ENCODE measurements at regions of chr17 and their contacts with region 1.

Region 1: DNA sequence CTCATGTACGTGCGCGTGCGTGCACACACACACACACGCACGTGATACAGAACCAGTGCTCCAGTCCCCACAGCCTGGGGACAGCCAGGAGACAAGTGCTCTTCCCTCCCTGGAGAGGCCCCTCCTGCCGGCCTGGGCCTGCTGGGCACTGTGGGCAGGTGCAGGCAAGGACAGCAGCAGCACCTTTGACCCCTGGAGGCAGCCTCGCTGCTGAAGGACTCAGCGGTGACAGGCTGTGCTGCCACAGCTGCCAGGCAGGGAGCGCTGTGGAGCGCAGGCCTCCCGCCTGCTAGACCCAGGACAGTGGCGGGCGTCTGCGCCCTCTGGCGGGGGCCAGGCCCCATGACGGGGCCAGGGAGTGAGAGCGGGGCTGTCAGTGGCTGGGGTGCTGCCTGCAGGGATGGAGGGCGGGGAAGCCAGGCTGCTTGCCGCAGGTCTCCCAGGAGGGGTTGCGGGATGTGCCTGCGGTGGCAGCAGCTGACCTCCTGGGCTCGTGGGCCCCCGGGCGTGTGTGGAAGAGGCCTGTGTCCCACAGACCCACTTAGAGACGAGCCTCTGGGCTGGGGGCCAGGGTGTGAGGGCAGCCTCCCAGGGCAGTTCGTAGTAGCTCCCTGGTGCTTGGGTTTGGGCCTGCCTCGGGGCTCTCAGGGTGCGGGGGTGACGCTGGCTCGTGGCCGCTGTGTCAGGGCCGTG is 63.5 kb upstream of the PVALEF start:
- DNase-seq: no peak
- H3K4me3 ChIP-seq: no peak overlapping the region
- H3K27ac ChIP-seq: peak overlapping the region in 1 of 4 donors; percentile 34
- H3K4me1 ChIP-seq: peaks cover 16 to 38% (median 20%) of the 10 kb centered on the region in 3 donors
- H3K27me3 ChIP-seq: no peaks in the 10 kb centered on the region
- CTCF ChIP-seq: peak; percentile 97 to 100 (median 100)
- POLR2A ChIP-seq: no peak

Region 2: GRCh38 chr17:80991645-80992076 is 110.1 kb before region 1 on chr17 and contains the start of gene CHMP6:
- intact Hi-C with region 1: loop called (anchors 10 kb)
- DNase-seq: no peak
- H3K4me3 ChIP-seq: peak within 1 kb of the TSS; percentile 74 to 100 (median 94)
- H3K27ac ChIP-seq: peak within 1 kb of the TSS; percentile 64 to 88 (median 79)
- H3K4me1 ChIP-seq: peaks cover 16 to 64% (median 32%) of the 10 kb centered on the region in 3 donors
- H3K27me3 ChIP-seq: no peaks in the 10 kb centered on the region
- CTCF ChIP-seq: peak in 5 of 6 experiments; percentile 11 to 74 (median 55)
- POLR2A ChIP-seq: no peak
- total RNA-seq, gene CHMP6: 16.7 to 23.8 (median 22.1) TPM

Region 3: DNA sequence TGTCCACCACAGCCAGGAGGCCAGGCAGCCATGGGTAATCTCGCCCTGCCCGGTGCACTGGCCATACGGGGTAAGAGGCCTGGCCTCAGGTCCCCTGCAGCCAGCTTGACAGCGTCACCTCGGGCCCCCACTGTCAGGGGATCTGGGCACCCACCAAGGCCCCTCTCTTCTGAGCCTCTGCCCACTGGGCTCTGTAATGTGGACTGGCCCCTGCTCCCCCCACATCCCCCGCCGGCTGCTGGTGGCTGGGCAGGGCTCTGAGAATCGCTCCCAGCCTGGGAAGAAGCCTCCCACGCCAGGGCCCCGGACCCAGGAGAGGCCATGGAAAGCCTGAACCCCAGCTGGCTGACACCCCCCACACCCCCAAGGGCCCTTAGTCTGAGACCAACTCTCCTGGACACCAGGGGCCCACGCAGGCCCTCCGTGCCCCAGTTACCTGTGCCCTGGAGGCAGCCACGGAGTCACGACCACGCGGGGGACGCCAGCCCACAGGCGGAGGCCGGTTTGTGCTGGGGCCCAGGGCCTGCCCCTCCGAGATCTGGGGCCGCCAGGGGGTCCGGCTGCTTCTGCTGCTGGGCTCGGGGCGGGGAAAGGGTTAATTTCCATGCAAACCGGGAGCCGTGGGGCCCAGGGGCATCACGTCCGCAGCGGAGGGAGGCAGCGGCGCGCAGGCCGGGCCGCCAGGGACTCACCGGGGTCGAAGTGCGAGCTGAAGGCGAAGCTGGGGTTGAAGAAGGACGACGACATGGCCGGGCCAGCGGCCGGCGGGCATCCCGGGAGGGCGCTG is 63.7 kb after region 1 on chr17 and contains the start of gene PVALEF:
- intact Hi-C with region 1: no loop called
- DNase-seq: no peak
- H3K4me3 ChIP-seq: peak within 1 kb of the TSS; percentile 9 to 59 (median 30)
- H3K27ac ChIP-seq: peak within 1 kb of the TSS in 2 of 4 donors; percentile 29 to 44
- H3K4me1 ChIP-seq: peaks cover 6 to 28% (median 12%) of the 10 kb centered on the region in 3 donors
- H3K27me3 ChIP-seq: peaks cover 0 to 70% (median 7%) of the 10 kb centered on the region in 4 donors
- CTCF ChIP-seq: no peak
- POLR2A ChIP-seq: no peak
- total RNA-seq, gene PVALEF: not detected